GM23248 (cell line): ENCODE measurements at regions of chr16 and their contacts with region 1.

Region 1: GRCh38 chr16:11639925-11640899 is 28.0 kb upstream of the SNN start:
- DNase-seq: peak; percentile 99
- H3K4me3 ChIP-seq: peak overlapping the region; percentile 42
- H3K27ac ChIP-seq: peak overlapping the region; percentile 98
- H3K4me1 ChIP-seq: peaks cover 14% of the 10 kb centered on the region
- H3K27me3 ChIP-seq: no peaks in the 10 kb centered on the region

Region 2: DNA sequence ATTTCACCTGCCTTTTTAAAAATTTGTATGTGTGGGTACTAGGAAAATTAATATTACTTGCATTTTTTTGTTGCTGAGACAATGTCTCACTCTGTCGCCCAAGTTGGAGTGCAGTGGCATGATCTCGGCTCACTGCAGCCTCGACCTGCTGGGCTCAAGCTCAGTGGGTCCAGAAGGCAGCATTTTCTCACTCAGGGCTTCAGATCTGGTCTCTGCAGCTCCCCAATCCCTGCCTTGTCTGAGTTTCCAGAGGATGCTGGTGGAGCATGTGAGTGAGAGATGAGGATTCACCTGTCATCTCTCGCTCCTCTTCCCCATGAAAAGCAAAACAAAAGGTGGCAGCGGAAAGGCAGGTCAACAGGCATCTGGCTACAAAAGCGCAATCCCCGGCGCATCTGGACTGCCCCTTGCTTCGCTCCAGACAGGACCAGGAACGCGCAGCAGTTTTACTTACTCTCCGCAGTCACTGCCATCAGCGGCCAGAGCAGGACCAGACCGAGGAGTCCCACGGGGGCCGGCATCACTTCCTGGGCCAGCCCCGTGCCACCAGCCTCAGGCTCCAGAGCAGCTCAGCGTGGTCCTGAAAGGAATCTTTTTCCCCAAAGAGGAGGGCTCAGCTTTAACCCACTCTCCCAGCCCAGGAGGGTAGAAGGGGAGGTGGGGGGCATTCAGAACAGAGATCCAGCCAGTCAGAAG is 113.4 kb before region 1 on chr16:
- in situ Hi-C with region 1: loop called (anchors 10 kb)
- DNase-seq: peak; percentile 19
- H3K4me3 ChIP-seq: no peak overlapping the region
- H3K27ac ChIP-seq: no peak overlapping the region
- H3K4me1 ChIP-seq: no peaks in the 10 kb centered on the region
- H3K27me3 ChIP-seq: peaks cover 12% of the 10 kb centered on the region; the same call in 1 of the 2 replicates

Region 3: DNA sequence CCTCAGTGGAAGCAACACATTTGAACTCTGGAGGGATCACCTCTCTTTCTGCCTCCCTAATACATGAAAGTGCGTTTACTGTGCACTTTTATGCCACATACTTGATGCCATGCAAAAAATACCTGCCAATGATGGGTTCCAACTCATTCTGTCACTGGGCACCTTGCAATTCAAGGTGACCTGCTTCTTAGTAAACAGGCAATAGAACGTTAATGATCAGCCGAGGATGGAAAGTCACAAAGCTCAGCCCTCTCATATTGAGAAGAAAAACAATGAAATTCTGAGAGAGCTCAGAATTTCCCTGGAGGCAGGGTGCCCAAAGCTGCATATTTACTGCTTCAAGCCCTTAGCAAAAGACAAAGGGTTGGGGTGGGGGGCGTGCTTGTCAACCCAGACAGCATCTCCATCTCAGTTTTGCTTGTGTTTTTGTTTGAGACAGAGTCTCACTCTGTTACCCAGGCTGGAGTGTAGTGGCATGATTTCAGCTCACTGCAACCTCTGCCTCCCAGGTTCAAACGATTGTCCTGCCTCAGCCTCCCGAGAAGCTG is 76.6 kb before region 1 on chr16:
- in situ Hi-C with region 1: no loop called
- DNase-seq: no peak
- H3K4me3 ChIP-seq: no peak overlapping the region
- H3K27ac ChIP-seq: no peak overlapping the region
- H3K4me1 ChIP-seq: no peaks in the 10 kb centered on the region
- H3K27me3 ChIP-seq: no peaks in the 10 kb centered on the region